Endothelial cell of umbilical vein (primary cell): ENCODE measurements at regions of chr9 and their contacts with region 1.

Region 1: GRCh38 chr9:4489919-4490704 is at the start of gene SLC1A1:
- DNase-seq: peak; percentile 69
- H3K4me3 ChIP-seq: peak within 1 kb of the TSS; percentile 84 to 94 (median 90)
- H3K27ac ChIP-seq: peak within 1 kb of the TSS; percentile 16
- H3K4me1 ChIP-seq: peaks cover 35% of the 10 kb centered on the region
- H3K27me3 ChIP-seq: no peaks in the 10 kb centered on the region
- CTCF ChIP-seq: no peak
- POLR2A ChIP-seq: no peak
- total RNA-seq, gene SLC1A1: 6.5 and 8.3 TPM in 2 replicates

Region 2: GRCh38 chr9:4174781-4175180 is 315.3 kb before region 1 on chr9:
- CTCF ChIA-PET with region 1: no interaction called
- POLR2A ChIA-PET with region 1: no interaction called
- dilution Hi-C with region 1: no loop called
- intact Hi-C with region 1: no loop called
- DNase-seq: no peak
- H3K4me3 ChIP-seq: no peak overlapping the region
- H3K27ac ChIP-seq: no peak overlapping the region
- H3K4me1 ChIP-seq: no peaks in the 10 kb centered on the region
- H3K27me3 ChIP-seq: no peaks in the 10 kb centered on the region
- CTCF ChIP-seq: no peak
- POLR2A ChIP-seq: no peak

Region 3: DNA sequence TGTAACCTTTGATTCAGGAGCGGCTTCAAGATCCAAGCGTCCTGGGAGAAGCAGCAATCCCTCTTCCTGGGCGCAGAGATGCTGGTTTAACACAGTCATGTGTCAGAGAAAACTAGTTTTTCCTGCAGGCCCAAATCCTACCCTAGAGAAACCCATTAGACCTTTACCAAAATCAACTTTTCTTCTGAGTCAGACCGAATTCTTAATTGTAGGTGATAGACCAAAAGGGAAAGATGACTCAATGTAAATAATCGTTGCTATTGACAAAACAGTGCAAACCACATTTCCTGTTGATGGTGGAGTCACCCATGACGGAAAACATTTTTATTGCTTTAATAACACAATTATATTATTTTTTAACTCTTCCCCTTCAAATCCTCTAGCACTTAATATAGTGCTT is 40.3 kb after region 1 on chr9:
- CTCF ChIA-PET with region 1: no interaction called
- POLR2A ChIA-PET with region 1: no interaction called
- dilution Hi-C with region 1: no loop called
- intact Hi-C with region 1: loop called (anchors 1 kb)
- DNase-seq: peak; percentile 80
- H3K4me3 ChIP-seq: peak overlapping the region in 1 of 3 experiments; percentile 28
- H3K27ac ChIP-seq: peak overlapping the region; percentile 96
- H3K4me1 ChIP-seq: peaks cover 26% of the 10 kb centered on the region
- H3K27me3 ChIP-seq: no peaks in the 10 kb centered on the region
- CTCF ChIP-seq: no peak
- POLR2A ChIP-seq: peak; percentile 19

Region 4: DNA sequence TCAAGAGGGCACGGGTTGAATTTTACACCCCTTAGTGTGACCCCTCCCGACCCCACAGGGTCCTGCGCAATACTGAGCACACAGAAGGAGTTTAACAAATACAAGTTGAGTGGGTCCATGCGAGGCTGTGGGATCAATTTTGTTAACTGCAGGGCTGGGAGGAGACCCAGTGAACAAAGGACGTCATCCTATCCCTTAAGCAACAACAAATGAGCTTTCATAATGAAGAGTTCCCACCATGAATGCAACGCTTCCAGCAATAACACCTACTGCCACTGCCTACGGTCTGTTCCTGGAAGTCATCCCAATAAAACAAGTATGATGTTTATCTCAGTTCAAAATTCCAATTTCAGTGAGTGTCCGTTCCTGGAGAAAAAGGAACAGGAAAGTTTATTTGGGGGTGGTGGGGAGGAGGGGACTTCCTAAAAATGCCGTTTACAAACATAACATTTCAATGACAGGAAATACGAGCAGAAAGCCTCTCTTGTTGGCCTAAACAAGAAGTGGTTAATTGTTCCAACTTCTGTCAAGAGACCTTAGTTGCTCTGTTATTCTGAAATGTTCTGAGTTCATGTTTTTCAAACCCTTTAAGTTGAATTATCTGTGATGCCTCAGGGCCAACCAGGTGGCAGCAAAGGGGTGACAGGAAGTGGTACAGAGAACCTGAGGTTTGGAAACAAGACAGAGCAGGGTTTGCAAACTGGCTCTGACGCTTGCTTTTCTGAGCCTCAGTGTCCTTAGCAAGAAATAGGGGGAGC is 106.2 kb after region 1 on chr9:
- CTCF ChIA-PET with region 1: interaction called, 4 read pairs
- POLR2A ChIA-PET with region 1: no interaction called
- dilution Hi-C with region 1: no loop called
- intact Hi-C with region 1: loop called (anchors 2 kb)
- DNase-seq: peak; percentile 89
- H3K4me3 ChIP-seq: peak overlapping the region in 1 of 3 experiments; percentile 11
- H3K27ac ChIP-seq: peak overlapping the region; percentile 58
- H3K4me1 ChIP-seq: peaks cover 17% of the 10 kb centered on the region
- H3K27me3 ChIP-seq: no peaks in the 10 kb centered on the region
- CTCF ChIP-seq: no peak
- POLR2A ChIP-seq: peak; percentile 19

Region 5: DNA sequence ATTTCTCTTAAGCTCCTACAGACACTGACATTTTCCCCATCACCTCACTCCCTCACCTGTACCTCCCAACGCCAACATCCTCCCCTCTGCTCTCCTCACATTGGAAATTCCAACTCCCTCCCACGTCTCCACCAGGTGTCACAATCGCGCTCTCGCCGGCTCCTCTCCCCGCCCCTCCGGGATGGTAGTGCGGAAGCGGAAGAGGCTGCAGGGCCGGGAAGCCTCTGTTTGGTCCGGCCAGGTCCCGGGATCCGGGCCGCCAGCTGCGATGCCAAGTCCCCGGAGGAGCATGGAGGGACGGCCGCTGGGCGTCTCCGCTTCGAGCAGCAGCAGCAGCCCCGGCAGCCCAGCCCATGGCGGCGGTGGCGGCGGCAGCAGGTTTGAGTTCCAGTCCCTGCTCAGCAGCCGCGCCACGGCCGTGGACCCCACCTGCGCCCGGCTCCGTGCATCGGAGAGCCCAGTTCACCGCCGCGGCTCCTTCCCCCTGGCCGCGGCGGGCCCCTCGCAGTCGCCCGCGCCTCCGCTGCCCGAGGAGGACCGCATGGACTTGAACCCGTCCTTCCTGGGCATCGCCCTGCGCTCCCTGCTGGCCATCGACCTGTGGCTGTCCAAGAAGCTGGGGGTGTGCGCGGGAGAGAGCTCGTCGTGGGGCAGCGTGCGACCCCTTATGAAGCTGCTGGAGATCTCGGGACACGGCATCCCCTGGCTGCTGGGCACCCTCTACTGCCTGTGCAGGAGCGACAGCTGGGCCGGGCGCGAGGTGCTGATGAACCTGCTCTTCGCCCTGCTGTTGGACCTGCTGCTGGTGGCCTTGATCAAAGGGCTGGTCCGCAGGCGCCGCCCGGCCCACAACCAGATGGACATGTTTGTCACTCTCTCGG is 172.2 kb after region 1 on chr9 and contains the start of gene PLPP6:
- CTCF ChIA-PET with region 1: interaction called, 3 read pairs
- POLR2A ChIA-PET with region 1: no interaction called
- dilution Hi-C with region 1: no loop called
- intact Hi-C with region 1: loop called (anchors 2 kb)
- DNase-seq: peak; percentile 76
- H3K4me3 ChIP-seq: peak within 1 kb of the TSS; percentile 57 to 81 (median 71)
- H3K27ac ChIP-seq: peak within 1 kb of the TSS; percentile 10
- H3K4me1 ChIP-seq: peaks cover 32% of the 10 kb centered on the region
- H3K27me3 ChIP-seq: no peaks in the 10 kb centered on the region
- CTCF ChIP-seq: peak; percentile 18 to 57
- POLR2A ChIP-seq: peak; percentile 74
- total RNA-seq, gene PLPP6: 5.4 and 6.4 TPM in 2 replicates